PC-9 (cell line): ENCODE measurements at regions of chr4 and their contacts with region 1.

Region 1: GRCh38 chr4:101933906-101934305 is 143.4 kb downstream of the BANK1 start:
- DNase-seq: no peak
- H3K4me3 ChIP-seq: no peak overlapping the region
- H3K27ac ChIP-seq: no peak overlapping the region
- H3K4me1 ChIP-seq: no peaks in the 10 kb centered on the region
- H3K27me3 ChIP-seq: no peaks in the 10 kb centered on the region
- CTCF ChIP-seq: no peak

Region 2: GRCh38 chr4:101621120-101621519 is 312.8 kb before region 1 on chr4:
- CTCF ChIA-PET with region 1: no interaction called
- POLR2A ChIA-PET with region 1: no interaction called
- intact Hi-C with region 1: no loop called
- DNase-seq: no peak
- H3K4me3 ChIP-seq: no peak overlapping the region
- H3K27ac ChIP-seq: no peak overlapping the region
- H3K4me1 ChIP-seq: no peaks in the 10 kb centered on the region
- H3K27me3 ChIP-seq: no peaks in the 10 kb centered on the region
- CTCF ChIP-seq: no peak

Region 3: GRCh38 chr4:101921329-101921728 is 12.6 kb before region 1 on chr4:
- CTCF ChIA-PET with region 1: no interaction called
- POLR2A ChIA-PET with region 1: no interaction called
- intact Hi-C with region 1: loop called (anchors 2 kb)
- DNase-seq: no peak
- H3K4me3 ChIP-seq: no peak overlapping the region
- H3K27ac ChIP-seq: no peak overlapping the region
- H3K4me1 ChIP-seq: no peaks in the 10 kb centered on the region
- H3K27me3 ChIP-seq: no peaks in the 10 kb centered on the region
- CTCF ChIP-seq: no peak